HEK293T (cell line): ENCODE measurements at regions of chr3 and their contacts with region 1.

Region 1: DNA sequence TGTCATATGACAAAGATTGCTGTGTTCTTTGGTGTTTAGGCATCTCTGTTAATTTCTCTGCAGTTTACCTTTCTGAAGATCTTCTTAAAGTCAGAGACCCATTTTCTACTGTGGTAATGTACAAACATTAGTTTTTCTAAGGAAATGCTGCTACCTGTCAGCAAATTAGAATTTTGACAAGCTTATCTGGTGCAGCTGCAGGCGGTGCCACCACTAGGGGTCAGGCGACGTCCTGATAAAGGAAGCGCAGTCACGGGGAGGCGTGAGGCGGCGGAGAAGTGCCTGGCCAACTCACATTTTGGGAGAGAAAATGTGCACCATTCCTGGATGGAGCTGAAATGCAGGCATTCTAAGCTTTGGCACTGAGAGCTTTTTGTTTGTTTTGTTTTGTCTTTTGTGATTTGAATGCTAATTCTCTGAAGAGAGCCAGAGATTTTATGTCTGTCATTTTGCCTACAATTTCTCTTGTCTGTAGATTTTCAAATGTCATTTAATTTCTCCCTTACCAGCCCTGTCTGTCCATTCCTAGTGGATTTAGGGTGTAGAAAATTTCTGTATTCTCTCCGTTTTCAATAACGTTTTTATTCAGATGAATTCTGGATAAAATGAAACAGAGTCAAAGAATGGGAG is 24.9 kb upstream of the SIAH2 start:
- DNase-seq: peak; percentile 75

Region 2: DNA sequence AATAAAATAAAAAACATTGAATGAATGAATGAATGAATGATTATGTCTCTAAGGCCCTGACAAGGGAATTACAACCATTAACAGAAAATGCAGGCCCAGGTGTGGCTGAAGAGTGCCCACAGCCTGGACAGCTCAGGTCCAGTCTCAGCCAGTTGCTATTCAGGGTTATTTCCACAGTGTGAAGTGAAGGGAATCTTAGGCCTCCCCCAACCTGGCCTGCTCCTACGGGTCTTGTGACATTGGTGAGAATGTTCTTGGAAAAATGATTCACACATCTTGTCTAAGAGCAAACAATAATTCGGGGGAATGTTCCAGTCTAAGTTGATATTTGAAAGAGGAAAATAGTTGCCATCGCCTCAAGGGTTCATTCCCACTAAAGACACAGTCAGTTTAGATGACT is 80.4 kb after region 1 on chr3:
- CTCF ChIA-PET with region 1: interaction called, 10 read pairs
- POLR2A ChIA-PET with region 1: no interaction called
- DNase-seq: no peak